ENCODE measurements at regions of chr22 and their contacts with region 1.

Region 1: DNA sequence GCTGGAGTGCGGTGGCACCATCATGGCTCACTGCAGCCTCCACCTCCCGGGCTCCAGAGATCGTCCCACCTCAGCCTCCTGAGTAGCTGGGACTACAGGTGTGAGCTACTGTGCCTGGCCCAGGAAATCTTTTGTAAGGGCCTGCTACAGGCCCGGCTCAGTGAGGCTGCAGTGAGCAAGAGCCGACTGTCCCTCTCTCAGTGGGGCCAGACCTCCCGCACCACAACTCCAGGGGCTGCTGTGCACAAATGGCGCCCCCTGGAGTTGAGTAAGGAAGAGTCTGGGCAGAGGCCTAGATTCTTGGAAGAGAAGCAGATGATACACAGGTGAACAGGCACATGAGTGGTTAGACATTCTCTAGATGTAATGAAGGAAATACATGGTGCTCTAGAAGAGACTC is 7.0 kb downstream of the SERHL2 start:
- DNase-seq: peak; percentile 49 to 68 (median 56)
- ATAC-seq: peak; percentile 89
- H3K4me3 ChIP-seq: no peak overlapping the region
- H3K27ac ChIP-seq: no peak overlapping the region
- H3K4me1 ChIP-seq: peaks cover 10 to 23% of the 10 kb centered on the region in 2 experiments; a peak in 4 of 5 replicates
- H3K27me3 ChIP-seq: no peaks in the 10 kb centered on the region
- CTCF ChIP-seq: peak; percentile 66 to 78 (median 73)
- EP300 ChIP-seq: no peak
- POLR2A ChIP-seq: no peak
- RAD21 ChIP-seq: peak; percentile 21 to 69; a peak in 3 of 4 replicates

Region 2: GRCh38 chr22:42511401-42511891 is 49.3 kb before region 1 on chr22:
- CTCF ChIA-PET with region 1: no interaction called
- POLR2A ChIA-PET with region 1: no interaction called
- in situ Hi-C with region 1: loop called (anchors 5 kb)
- intact Hi-C with region 1: no loop called
- DNase-seq: no peak
- ATAC-seq: no peak; the same call in 2 of the 3 replicates
- H3K4me3 ChIP-seq: no peak overlapping the region
- H3K27ac ChIP-seq: no peak overlapping the region
- H3K4me1 ChIP-seq: peaks cover 0 to 23% of the 10 kb centered on the region in 2 experiments; a peak in 2 of 5 replicates
- H3K27me3 ChIP-seq: no peaks in the 10 kb centered on the region
- CTCF ChIP-seq: no peak
- EP300 ChIP-seq: no peak
- POLR2A ChIP-seq: peak; percentile 62
- RAD21 ChIP-seq: no peak

Measured in K562 (cell line).